Gastrocnemius medialis (tissue), 4 donors: ENCODE measurements at regions of chrX and their contacts with region 1.

Region 1: GRCh38 chrX:147875866-147876596 is 35.7 kb upstream of the FMR1 start:
- DNase-seq: no peak
- ATAC-seq: no peak
- H3K4me3 ChIP-seq: no peak overlapping the region
- H3K27ac ChIP-seq: no peak overlapping the region
- H3K4me1 ChIP-seq: no peaks in the 10 kb centered on the region
- H3K27me3 ChIP-seq: no peaks in the 10 kb centered on the region
- CTCF ChIP-seq: no peak
- POLR2A ChIP-seq: no peak

Region 2: GRCh38 chrX:147811803-147812202 is 64.2 kb before region 1 on chrX:
- in situ Hi-C with region 1: loop called in 1 of 4 experiments (anchors 10 kb)
- intact Hi-C with region 1: no loop called
- DNase-seq: no peak
- ATAC-seq: no peak
- H3K4me3 ChIP-seq: no peak overlapping the region
- H3K27ac ChIP-seq: no peak overlapping the region
- H3K4me1 ChIP-seq: no peaks in the 10 kb centered on the region
- H3K27me3 ChIP-seq: no peaks in the 10 kb centered on the region
- CTCF ChIP-seq: no peak
- POLR2A ChIP-seq: no peak

Region 3: DNA sequence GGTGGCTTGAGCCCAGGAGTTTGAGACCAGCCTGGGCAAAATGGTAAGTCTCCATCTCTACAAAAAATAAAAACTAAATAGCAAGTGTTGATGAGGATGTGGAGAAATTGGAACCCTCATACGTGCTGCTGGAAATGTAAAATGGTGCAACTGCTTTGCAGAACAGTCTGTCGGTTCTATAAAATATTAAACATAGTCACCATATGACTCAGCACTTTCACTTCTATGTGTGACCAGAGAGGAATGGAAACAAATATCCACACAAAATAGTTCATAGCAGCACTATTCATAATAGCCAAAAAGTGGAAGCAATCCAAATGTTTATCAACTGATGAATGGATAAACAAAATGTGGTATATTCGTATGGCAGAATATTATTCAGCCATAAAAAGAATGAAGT is 25.2 kb before region 1 on chrX:
- in situ Hi-C with region 1: no loop called
- intact Hi-C with region 1: no loop called
- DNase-seq: no peak
- ATAC-seq: no peak
- H3K4me3 ChIP-seq: no peak overlapping the region
- H3K27ac ChIP-seq: no peak overlapping the region
- H3K4me1 ChIP-seq: no peaks in the 10 kb centered on the region
- H3K27me3 ChIP-seq: no peaks in the 10 kb centered on the region
- CTCF ChIP-seq: no peak
- POLR2A ChIP-seq: no peak

Region 4: DNA sequence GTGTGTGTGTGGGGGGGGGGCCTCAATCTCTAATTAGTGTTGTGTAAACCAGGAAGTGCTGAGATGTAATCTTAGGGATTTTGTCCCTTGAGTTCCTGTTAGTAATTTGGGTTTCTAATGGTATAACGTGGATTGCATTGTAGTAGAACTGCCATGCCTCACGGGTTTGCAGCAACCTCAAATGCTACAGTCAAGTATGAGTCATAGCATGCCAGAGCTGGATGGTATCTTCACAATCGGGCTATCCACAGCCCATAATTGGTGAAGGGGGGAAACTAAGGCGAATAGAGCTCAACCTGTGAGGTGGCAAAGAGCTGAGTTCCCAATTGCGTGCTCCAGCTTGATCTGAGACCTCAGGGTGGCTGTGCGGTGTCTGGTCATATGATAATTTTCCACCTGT is 102.9 kb after region 1 on chrX:
- in situ Hi-C with region 1: loop called in 1 of 4 experiments (anchors 25 kb)
- intact Hi-C with region 1: no loop called
- DNase-seq: no peak
- ATAC-seq: no peak
- H3K4me3 ChIP-seq: no peak overlapping the region
- H3K27ac ChIP-seq: no peak overlapping the region
- H3K4me1 ChIP-seq: no peaks in the 10 kb centered on the region
- H3K27me3 ChIP-seq: no peaks in the 10 kb centered on the region
- CTCF ChIP-seq: no peak
- POLR2A ChIP-seq: no peak

Region 5: DNA sequence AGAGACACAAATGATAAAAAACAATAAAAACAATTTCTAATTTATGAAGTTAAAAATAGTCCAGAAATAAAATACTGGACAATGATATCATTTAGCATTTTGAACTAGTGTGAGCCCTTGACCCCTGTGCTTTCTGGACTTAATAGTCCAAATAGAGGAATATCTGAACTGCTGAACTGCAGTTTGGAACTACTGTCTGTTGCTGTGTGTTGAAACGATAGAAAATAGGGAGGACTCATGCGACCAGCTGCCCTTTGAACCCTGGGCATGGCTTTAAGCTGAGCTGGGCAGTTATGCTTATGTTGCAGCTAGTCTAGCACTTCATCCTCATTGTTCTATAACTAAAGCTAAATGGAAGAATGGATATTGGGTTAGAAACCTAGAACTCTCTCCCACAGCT is 204.6 kb after region 1 on chrX:
- in situ Hi-C with region 1: no loop called
- intact Hi-C with region 1: no loop called
- DNase-seq: no peak
- ATAC-seq: no peak
- H3K4me3 ChIP-seq: no peak overlapping the region
- H3K27ac ChIP-seq: no peak overlapping the region
- H3K4me1 ChIP-seq: no peaks in the 10 kb centered on the region
- H3K27me3 ChIP-seq: no peaks in the 10 kb centered on the region
- CTCF ChIP-seq: no peak
- POLR2A ChIP-seq: no peak